Activated B cell treated with CpG ODN at 0.5 μM for 24 hours (primary cell): ENCODE measurements at regions of chr17 and their contacts with region 1.

Region 1: DNA sequence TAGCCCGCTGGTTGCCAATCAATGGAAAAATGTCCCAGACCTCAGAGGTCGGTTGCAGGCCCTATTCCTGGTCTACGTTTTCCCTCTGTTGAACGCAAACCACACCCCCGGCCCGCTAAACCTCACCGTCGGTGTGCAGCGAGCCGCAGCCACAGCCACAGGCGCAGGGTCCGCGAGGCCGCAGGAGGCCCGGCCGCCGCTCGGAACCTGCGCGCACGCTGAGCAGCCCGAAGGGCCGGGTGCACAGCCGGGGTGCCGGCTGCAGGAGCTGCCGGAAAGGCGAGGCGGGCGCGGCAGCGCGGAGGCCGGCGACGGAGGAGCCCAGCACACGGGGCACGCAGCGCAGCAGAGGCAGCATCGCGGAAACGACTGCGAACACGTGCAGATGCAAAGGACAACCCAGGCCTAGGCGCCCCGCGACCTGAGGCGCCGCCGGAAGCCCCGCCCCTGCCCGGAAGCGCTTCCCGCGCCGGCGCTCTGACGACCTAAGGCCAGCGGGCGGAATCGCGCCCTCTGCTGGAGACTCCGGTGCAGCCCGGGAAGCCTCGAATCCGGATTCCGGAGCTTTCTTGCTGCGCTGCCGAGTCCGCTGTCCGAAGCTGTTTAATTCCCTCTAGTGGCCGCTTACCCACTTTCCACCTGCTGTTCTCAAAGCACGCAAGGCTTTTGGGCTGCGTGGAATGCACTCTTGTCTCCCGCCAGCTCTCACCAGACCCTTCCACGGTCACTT is at the start of gene C1QBP:
- DNase-seq: peak; percentile 95
- ATAC-seq: peak; percentile 91
- H3K4me3 Mint-ChIP-seq: peak within 1 kb of the TSS; percentile 83
- H3K27ac Mint-ChIP-seq: peak within 1 kb of the TSS; percentile 91
- H3K4me1 Mint-ChIP-seq: peaks cover 32% of the 10 kb centered on the region
- H3K27me3 Mint-ChIP-seq: no peaks in the 10 kb centered on the region
- CTCF ChIP-seq: peak; percentile 96
- total RNA-seq, gene C1QBP: 160 and 177 TPM in 2 replicates

Region 2: DNA sequence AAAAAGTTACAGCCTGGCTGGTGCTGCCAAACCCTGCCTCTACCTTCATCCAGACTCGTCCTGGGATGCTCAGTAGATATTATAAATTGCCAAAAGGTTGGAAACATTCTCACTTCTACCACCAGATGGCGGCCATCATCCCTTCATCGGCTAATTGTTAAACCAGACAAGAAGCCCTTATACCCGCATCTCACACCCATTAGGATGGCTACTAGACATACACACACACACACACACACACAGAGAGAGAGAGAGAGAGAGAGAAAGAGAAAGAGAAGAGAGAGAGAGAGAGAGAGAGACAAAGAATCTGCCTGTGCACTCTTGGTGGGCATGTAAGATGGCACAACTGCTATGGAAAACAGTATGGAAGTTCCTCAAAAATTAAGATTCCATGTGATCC is 189.3 kb before region 1 on chr17:
- CTCF ChIA-PET with region 1: interaction called, 19 read pairs
- POLR2A ChIA-PET with region 1: interaction called, 4 read pairs
- intact Hi-C with region 1: loop called (anchors 1 kb)
- DNase-seq: no peak
- ATAC-seq: peak; percentile 91
- H3K4me3 Mint-ChIP-seq: no peak overlapping the region
- H3K27ac Mint-ChIP-seq: peak overlapping the region; percentile 72
- H3K4me1 Mint-ChIP-seq: peaks cover 52% of the 10 kb centered on the region
- H3K27me3 Mint-ChIP-seq: no peaks in the 10 kb centered on the region
- CTCF ChIP-seq: no peak

Region 3: GRCh38 chr17:5297245-5297644 is 141.6 kb before region 1 on chr17:
- CTCF ChIA-PET with region 1: interaction called, 10 read pairs
- POLR2A ChIA-PET with region 1: no interaction called
- intact Hi-C with region 1: no loop called
- DNase-seq: no peak
- ATAC-seq: peak; percentile 77
- H3K4me3 Mint-ChIP-seq: no peak overlapping the region
- H3K27ac Mint-ChIP-seq: peak overlapping the region; percentile 57
- H3K4me1 Mint-ChIP-seq: peaks cover 62% of the 10 kb centered on the region
- H3K27me3 Mint-ChIP-seq: no peaks in the 10 kb centered on the region
- CTCF ChIP-seq: no peak

Region 4: GRCh38 chr17:5355421-5356129 is 83.3 kb before region 1 on chr17:
- CTCF ChIA-PET with region 1: no interaction called
- POLR2A ChIA-PET with region 1: no interaction called
- intact Hi-C with region 1: no loop called
- DNase-seq: no peak
- ATAC-seq: no peak
- H3K4me3 Mint-ChIP-seq: no peak overlapping the region
- H3K27ac Mint-ChIP-seq: no peak overlapping the region
- H3K4me1 Mint-ChIP-seq: no peaks in the 10 kb centered on the region
- H3K27me3 Mint-ChIP-seq: no peaks in the 10 kb centered on the region
- CTCF ChIP-seq: no peak

Region 5: DNA sequence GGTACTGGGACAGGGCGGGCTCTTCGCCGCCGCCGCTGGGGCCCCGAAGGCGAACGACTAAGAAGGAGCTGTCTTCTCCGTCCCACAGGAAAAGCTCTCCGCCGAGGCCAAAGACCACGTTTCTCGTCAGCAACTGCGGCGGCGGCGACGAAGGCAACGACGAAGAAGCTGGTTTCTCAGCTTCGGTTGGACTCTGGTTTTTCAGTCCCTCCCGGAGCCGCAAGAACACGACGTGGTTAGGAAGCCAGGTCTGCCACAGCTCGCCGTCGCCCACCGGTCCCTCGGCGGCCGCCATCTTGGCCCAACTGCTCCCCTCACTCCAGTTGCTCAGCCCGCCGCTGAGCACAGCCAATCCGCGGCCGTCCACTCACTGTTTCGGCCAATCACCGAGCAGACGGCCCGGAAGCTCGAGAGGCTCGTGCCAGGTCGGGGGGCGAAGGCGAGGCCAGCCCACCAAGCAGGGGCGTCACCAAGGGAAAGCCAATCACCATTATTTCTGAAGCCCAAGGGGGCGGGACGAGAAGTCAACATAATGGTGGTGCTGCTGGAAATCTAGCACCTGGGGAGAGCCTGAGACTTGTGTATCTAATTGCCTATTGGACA is 19.4 kb before region 1 on chr17 and contains the start of gene NUP88:
- CTCF ChIA-PET with region 1: interaction called, 24 read pairs
- POLR2A ChIA-PET with region 1: interaction called, 39 read pairs
- intact Hi-C with region 1: loop called (anchors 1 kb)
- DNase-seq: peak; percentile 87
- ATAC-seq: peak; percentile 86
- H3K4me3 Mint-ChIP-seq: peak within 1 kb of the TSS; percentile 100
- H3K27ac Mint-ChIP-seq: peak within 1 kb of the TSS; percentile 100
- H3K4me1 Mint-ChIP-seq: peaks cover 49% of the 10 kb centered on the region
- H3K27me3 Mint-ChIP-seq: no peaks in the 10 kb centered on the region
- CTCF ChIP-seq: no peak
- total RNA-seq, gene NUP88: 158 and 187 TPM in 2 replicates

Region 6: GRCh38 chr17:5468075-5468473 is 29.2 kb after region 1 on chr17:
- CTCF ChIA-PET with region 1: interaction called, 4 read pairs
- POLR2A ChIA-PET with region 1: interaction called, 11 read pairs
- intact Hi-C with region 1: loop called (anchors 2 kb)
- DNase-seq: no peak
- ATAC-seq: no peak
- H3K4me3 Mint-ChIP-seq: peak overlapping the region; percentile 85
- H3K27ac Mint-ChIP-seq: peak overlapping the region; percentile 47
- H3K4me1 Mint-ChIP-seq: peaks cover 37% of the 10 kb centered on the region
- H3K27me3 Mint-ChIP-seq: no peaks in the 10 kb centered on the region
- CTCF ChIP-seq: no peak

Region 7: GRCh38 chr17:5526821-5527598 is 88.1 kb after region 1 on chr17:
- CTCF ChIA-PET with region 1: no interaction called
- POLR2A ChIA-PET with region 1: no interaction called
- intact Hi-C with region 1: no loop called
- DNase-seq: no peak
- ATAC-seq: peak; percentile 34
- H3K4me3 Mint-ChIP-seq: no peak overlapping the region
- H3K27ac Mint-ChIP-seq: no peak overlapping the region
- H3K4me1 Mint-ChIP-seq: no peaks in the 10 kb centered on the region
- H3K27me3 Mint-ChIP-seq: no peaks in the 10 kb centered on the region
- CTCF ChIP-seq: no peak

Region 8: GRCh38 chr17:5587438-5588032 is 148.7 kb after region 1 on chr17:
- CTCF ChIA-PET with region 1: no interaction called
- POLR2A ChIA-PET with region 1: no interaction called
- intact Hi-C with region 1: no loop called
- DNase-seq: no peak
- ATAC-seq: no peak
- H3K4me3 Mint-ChIP-seq: no peak overlapping the region
- H3K27ac Mint-ChIP-seq: peak overlapping the region; percentile 37
- H3K4me1 Mint-ChIP-seq: peaks cover 41% of the 10 kb centered on the region
- H3K27me3 Mint-ChIP-seq: no peaks in the 10 kb centered on the region
- CTCF ChIP-seq: peak; percentile 65